Stomach (tissue), 19 donors: ENCODE measurements at regions of chr17 and their contacts with region 1.

Region 1: GRCh38 chr17:61389670-61390478 is 9.8 kb upstream of the TBX2 start:
- DNase-seq: peak; percentile 57 to 81
- H3K4me3 ChIP-seq: no peak overlapping the region
- H3K27ac ChIP-seq: peak overlapping the region in 2 of 5 donors; percentile 32 to 49
- H3K4me1 ChIP-seq: peaks cover 4 to 11% (median 9%) of the 10 kb centered on the region in 4 donors
- H3K27me3 ChIP-seq: peaks cover 0 to 33% (median 0%) of the 10 kb centered on the region in 3 donors
- CTCF ChIP-seq: peak in 5 of 7 experiments; percentile 65 to 89 (median 72)
- EP300 ChIP-seq: no peak
- POLR2A ChIP-seq: no peak

Region 2: DNA sequence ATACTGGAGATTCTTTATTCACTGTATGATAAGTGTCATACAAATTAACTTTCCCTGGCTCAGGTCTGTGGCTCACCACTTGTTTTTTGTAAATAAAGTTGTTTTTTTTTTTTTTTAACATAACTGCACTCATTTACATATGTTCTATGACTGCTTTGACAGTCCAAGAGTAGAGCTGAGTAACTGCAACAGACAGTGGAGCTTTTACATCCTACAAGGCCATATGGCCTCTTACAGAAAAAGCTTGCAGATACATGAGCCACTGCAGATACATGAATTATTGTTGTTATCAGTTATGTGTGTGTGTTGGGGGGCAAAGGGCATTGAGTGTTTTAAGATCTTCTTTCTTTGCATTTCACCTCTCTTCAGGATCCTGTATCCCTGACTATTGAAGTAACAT is 400.5 kb before region 1 on chr17:
- intact Hi-C with region 1: loop called (anchors 10 kb)
- DNase-seq: no peak
- H3K4me3 ChIP-seq: no peak overlapping the region
- H3K27ac ChIP-seq: no peak overlapping the region
- H3K4me1 ChIP-seq: no peaks in the 10 kb centered on the region
- H3K27me3 ChIP-seq: no peaks in the 10 kb centered on the region
- CTCF ChIP-seq: no peak
- EP300 ChIP-seq: no peak
- POLR2A ChIP-seq: no peak